ENCODE measurements at regions of chr18 and their contacts with region 1.

Region 1: GRCh38 chr18:3305354-3305762 is 43.4 kb downstream of the MYL12B start:
- DNase-seq: peak; percentile 39
- H3K4me3 Mint-ChIP-seq: peak overlapping the region; percentile 20
- H3K27ac Mint-ChIP-seq: peak overlapping the region; percentile 99
- H3K4me1 Mint-ChIP-seq: peaks cover 22% of the 10 kb centered on the region
- H3K27me3 Mint-ChIP-seq: peaks cover 22% of the 10 kb centered on the region

Region 2: GRCh38 chr18:3323900-3324299 is 18.5 kb after region 1 on chr18:
- intact Hi-C with region 1: loop called (anchors 2 kb)
- DNase-seq: no peak
- H3K4me3 Mint-ChIP-seq: no peak overlapping the region
- H3K27ac Mint-ChIP-seq: no peak overlapping the region
- H3K4me1 Mint-ChIP-seq: peaks cover 26% of the 10 kb centered on the region
- H3K27me3 Mint-ChIP-seq: peaks cover 9% of the 10 kb centered on the region

Region 3: GRCh38 chr18:3354506-3354905 is 49.1 kb after region 1 on chr18:
- intact Hi-C with region 1: loop called (anchors 1 kb)
- DNase-seq: no peak
- H3K4me3 Mint-ChIP-seq: no peak overlapping the region
- H3K27ac Mint-ChIP-seq: peak overlapping the region; percentile 83
- H3K4me1 Mint-ChIP-seq: peaks cover 35% of the 10 kb centered on the region
- H3K27me3 Mint-ChIP-seq: no peaks in the 10 kb centered on the region

Measured in activated T-helper 2 cell treated with anti-CD3 and anti-CD28 coated beads, Interferon-gamma antibody, Interleukin-2, Interleukin-4, amounts not matched to agents 10 μg/mL and 5 μg/mL and 100 μg/mL, durations not matched to agents 14 hours and 24 hours and 36 hours (primary cell).